ENCODE measurements at regions of chr17 and their contacts with region 1.

Region 1: DNA sequence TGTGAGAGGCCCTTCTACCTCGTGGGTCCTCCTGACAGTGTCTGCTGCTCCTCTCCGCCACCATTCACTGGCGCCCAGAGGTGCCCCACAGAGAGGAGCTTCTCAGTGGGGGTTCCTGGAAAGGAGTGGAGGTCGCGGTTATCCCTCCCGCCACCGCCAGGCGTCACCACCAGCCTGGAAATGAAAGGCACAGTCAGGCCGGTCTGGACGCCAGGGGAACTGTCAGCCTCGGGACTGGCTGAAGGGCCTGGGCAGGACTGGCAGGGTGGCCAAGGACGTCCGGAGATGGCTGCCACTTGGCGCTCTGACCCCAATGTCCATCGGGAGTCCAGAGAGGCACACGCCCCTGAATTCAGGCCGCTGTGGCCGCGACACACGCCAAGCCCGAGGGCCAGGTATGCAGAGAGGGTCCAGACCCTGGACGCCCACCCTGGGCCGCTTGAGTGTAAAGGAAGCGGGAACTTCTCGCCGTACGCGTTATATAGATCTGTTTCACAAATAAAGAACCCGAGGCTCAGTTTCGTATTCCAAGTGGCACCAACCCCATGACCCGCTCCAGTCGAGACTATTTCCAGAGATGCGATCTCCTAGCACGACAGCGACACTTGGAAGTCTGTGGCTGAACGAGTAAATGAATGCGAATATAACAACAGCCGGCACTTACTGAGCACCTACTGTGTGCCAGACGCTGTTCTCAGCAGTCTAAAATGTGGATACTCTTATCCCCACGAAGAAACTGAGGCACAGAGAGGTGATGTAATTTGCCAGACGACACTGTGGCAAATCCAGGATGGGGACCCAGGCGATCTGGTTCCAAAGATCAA is 7.6 kb upstream of the NXPH3 start:
- DNase-seq: peak; percentile 69 to 88
- H3K4me3 ChIP-seq: peak overlapping the region; percentile 38; the same call in 1 of the 2 replicates
- H3K27ac ChIP-seq: no peak overlapping the region
- H3K4me1 ChIP-seq: 0 out of 2 replicates have a peak, but pooled peaks cover 6% of the 10 kb centered on the region
- H3K27me3 ChIP-seq: peaks cover 28% of the 10 kb centered on the region
- CTCF ChIP-seq: peak; percentile 99

Region 2: GRCh38 chr17:49162866-49163265 is 405.2 kb before region 1 on chr17:
- CTCF ChIA-PET with region 1: no interaction called
- POLR2A ChIA-PET with region 1: no interaction called
- intact Hi-C with region 1: no loop called
- DNase-seq: no peak
- H3K4me3 ChIP-seq: no peak overlapping the region
- H3K27ac ChIP-seq: no peak overlapping the region
- H3K4me1 ChIP-seq: no peaks in the 10 kb centered on the region
- H3K27me3 ChIP-seq: peaks cover 37% of the 10 kb centered on the region; the same call in 1 of the 2 replicates
- CTCF ChIP-seq: no peak

Region 3: DNA sequence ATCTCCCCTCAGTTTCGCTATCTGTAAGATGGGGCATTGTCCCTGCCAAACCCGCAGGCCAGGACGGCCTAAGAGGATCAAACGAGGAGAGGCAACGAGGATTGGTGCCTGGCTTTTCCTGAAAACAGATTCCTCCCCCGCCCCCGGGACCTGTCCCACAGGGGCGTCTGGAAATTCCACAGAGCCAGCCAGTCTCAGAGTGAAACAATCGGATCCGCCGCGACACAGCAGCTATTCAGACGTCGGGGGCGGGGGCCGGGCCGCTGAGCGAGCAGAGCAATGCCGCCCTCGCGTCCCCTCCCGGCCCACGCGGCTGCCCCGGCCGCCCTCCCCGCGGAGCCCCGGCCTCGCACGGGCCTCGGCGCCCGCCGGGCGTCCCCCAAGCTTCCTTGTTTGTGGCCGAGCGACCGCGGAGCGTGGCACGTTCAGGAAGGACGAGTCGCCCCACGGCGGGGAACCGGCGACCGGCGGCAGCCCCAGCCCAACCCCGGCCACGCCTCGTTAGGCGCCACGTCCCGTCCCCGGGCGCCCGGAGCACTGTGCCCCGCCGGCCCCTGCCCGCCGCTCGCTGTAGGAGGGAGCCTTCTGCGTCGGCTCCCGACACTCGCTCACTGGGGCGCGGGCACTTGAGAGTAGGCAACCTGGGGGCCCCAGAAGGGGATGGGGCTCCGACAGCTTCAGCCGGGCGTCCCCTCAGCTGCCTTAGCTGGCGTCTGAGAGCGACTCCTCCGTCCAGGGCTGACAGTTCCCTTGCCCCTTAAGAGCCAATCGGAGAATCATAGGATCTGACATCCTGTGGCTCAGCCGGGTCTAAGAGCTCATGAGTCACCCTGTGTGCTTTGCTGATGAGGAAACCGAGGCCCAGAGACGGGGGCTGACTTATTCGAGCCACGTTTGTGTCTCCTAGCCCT is 307.8 kb before region 1 on chr17:
- CTCF ChIA-PET with region 1: no interaction called
- POLR2A ChIA-PET with region 1: interaction called, 11 read pairs
- intact Hi-C with region 1: no loop called
- DNase-seq: peak; percentile 42 to 62
- H3K4me3 ChIP-seq: peak overlapping the region; percentile 58
- H3K27ac ChIP-seq: no peak overlapping the region
- H3K4me1 ChIP-seq: 0 out of 2 replicates have a peak, but pooled peaks cover 3% of the 10 kb centered on the region
- H3K27me3 ChIP-seq: no peaks in the 10 kb centered on the region
- CTCF ChIP-seq: no peak

Region 4: GRCh38 chr17:49851387-49852291 is 283.6 kb after region 1 on chr17:
- CTCF ChIA-PET with region 1: no interaction called
- POLR2A ChIA-PET with region 1: no interaction called
- intact Hi-C with region 1: loop called (anchors 2 kb)
- DNase-seq: peak in 1 of 2 experiments; percentile 66
- H3K4me3 ChIP-seq: peak overlapping the region; percentile 56; the same call in 1 of the 2 replicates
- H3K27ac ChIP-seq: no peak overlapping the region
- H3K4me1 ChIP-seq: peaks cover 5% of the 10 kb centered on the region
- H3K27me3 ChIP-seq: peaks cover 50% of the 10 kb centered on the region
- CTCF ChIP-seq: peak; percentile 74

Measured in PC-9 (cell line).